PC-3 (cell line): ENCODE measurements at regions of chr7 and their contacts with region 1.

Region 1: DNA sequence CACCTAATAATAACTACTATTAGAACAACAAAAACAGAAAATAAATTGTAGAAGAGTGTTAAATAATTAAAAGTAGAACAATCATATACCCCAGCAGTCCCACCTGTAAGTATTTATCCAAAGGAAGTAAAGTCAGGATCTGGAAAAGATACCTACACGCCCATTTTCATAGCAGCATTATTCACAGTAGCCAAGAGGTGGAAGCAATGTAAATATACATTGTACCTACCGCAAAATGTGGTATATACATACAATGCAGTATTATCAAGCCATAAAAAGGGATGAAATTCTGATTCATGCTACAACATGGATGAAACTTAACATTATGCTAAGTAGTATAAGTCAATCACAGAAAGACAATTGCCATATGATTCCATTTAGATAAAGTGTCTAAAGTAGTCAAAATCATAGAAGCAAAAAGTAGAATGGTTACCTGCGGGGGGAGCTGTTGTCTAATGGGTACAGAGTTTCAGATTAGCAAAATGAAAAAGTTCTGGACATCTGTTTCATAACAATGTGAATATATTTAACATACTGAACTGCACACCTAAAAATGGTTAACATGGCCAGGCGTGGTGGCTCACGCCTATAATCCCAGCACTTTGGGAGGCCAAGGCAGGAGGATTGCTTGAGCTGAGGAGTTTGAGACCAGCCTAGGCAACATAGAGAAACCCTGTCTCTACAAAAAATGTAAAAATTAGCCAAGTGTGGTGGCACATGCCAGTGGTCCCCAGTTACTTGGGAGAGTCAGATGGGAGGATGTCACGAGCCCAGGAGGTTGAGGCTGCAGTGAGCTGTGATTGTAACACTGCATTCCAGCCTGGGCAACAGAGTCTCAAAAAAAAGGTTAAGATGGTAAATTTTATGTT is 6.0 kb upstream of the TMED4 start:
- DNase-seq: peak; percentile 77
- ATAC-seq: peak; percentile 88
- H3K4me3 ChIP-seq: no peak overlapping the region
- H3K27ac ChIP-seq: peak overlapping the region; percentile 65
- H3K4me1 ChIP-seq: peaks cover 9% of the 10 kb centered on the region; the same call in 1 of the 2 replicates
- H3K27me3 ChIP-seq: no peaks in the 10 kb centered on the region
- CTCF ChIP-seq: peak; percentile 87

Region 2: GRCh38 chr7:44240983-44241510 is 347.0 kb before region 1 on chr7:
- CTCF ChIA-PET with region 1: no interaction called
- POLR2A ChIA-PET with region 1: no interaction called
- intact Hi-C with region 1: no loop called
- DNase-seq: peak; percentile 75
- ATAC-seq: peak; percentile 98
- H3K4me3 ChIP-seq: peak overlapping the region; percentile 39; the same call in 1 of the 2 replicates
- H3K27ac ChIP-seq: no peak overlapping the region
- H3K4me1 ChIP-seq: no peaks in the 10 kb centered on the region
- H3K27me3 ChIP-seq: no peaks in the 10 kb centered on the region
- CTCF ChIP-seq: peak; percentile 85

Region 3: DNA sequence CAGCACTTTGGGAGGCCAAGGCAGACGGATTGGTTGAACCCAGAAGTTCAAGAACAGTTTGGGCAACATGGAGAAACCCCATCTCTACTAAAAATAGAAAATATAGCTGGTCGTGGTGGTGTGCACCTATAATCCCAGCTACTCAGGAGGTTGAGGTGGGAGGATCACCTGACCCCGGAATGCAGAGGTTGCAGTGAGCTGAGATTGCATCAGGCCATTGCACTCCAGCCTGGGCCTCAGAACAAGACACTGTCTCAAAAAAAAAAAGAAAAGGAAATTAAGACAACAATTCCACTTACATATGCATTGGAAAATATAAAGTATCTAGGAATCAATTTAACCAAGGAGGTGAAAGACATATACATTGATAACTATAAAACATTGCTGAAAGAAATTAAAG is 11.1 kb after region 1 on chr7:
- CTCF ChIA-PET with region 1: no interaction called
- POLR2A ChIA-PET with region 1: no interaction called
- intact Hi-C with region 1: no loop called
- DNase-seq: no peak
- ATAC-seq: no peak
- H3K4me3 ChIP-seq: no peak overlapping the region
- H3K27ac ChIP-seq: no peak overlapping the region
- H3K4me1 ChIP-seq: no peaks in the 10 kb centered on the region; the same call in 1 of the 2 replicates
- H3K27me3 ChIP-seq: no peaks in the 10 kb centered on the region
- CTCF ChIP-seq: no peak

Region 4: DNA sequence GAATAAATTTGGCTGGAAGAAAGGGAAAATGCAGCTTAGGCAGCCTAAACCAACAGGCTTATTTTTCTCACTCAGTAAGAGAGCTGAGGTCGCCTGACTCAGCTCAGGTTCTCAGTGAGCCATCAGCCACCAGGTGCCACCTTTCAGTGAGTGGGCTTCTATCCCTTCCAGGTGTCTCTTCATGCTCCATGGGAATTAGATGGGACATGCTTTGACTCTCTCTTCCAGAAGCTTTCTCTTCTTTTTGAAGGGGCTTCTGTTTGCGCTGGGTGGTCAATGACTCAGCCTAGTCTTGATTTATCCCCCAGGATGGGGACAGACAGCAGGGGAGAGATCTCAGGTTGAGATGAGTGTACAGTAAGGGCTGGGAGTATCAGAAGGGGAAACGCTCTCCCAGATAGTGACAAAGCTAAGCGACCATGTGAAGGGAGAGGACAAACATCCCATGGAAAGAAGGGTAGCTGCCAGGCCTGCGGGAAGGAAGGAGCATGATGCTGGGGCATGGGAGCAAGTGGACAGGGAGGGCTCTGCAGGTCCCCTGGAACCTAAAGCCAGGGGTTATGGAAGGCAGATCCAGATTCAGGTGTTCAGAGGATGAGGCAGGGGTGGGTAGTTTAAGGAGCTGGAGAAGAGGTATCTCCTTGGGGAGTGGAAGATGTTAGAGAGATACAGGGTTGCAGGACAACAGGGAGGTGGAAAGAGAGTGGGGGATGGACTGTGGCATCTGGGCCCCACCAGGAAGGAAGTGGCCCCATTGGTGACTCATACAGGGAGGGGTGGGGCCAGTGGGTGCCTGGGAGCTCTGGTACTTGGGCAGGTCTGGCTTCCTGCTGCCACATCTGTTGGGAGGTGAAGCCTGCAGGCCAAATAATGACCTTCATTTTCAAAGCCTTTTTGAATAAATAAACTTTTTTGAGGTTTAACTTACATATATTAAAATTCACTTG is 50.8 kb after region 1 on chr7:
- CTCF ChIA-PET with region 1: interaction called, 3 read pairs
- POLR2A ChIA-PET with region 1: no interaction called
- intact Hi-C with region 1: loop called (anchors 2 kb)
- DNase-seq: peak; percentile 82
- ATAC-seq: peak; percentile 84
- H3K4me3 ChIP-seq: no peak overlapping the region
- H3K27ac ChIP-seq: peak overlapping the region; percentile 98
- H3K4me1 ChIP-seq: peaks cover 51% of the 10 kb centered on the region
- H3K27me3 ChIP-seq: no peaks in the 10 kb centered on the region
- CTCF ChIP-seq: no peak

Region 5: DNA sequence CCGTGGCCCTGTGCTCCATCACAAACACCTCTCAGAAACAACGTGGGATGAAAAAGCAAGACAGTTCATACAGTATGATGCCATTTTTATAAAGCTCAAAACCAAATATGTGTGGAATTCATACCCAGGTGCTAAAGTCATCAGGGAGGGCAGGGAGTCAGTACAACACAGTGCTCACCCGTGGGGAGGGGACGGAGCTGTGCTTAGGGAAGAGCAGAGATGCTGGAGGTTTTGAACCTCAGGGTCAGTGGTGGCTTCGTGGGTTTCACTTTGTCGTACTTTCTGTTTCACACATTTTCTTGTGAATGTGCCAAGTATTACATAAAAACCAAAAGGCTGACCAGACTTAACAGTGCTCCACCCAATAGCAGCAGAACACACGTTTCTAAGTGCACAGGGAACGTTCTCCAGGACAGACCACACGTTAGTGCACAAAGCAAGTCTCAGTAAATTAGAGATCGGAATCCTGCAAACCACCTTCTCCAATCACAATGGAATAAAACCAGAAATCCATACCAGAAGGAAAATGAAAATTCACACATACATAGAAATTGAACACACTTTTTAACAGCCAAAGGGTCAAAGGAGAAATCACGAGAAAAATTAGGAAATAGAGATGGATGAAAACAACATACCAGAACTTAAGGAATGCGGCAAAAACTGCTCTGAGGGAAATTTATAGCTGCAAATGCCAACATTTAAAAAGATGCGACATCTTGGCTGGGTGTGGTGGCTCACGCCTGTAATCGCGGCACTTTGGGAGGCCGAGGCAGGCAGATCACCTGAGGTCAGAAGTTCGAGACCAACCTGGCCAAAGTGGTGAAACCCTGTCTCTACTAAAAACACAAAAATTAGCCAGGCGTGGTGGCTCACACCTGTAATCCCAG is 181.9 kb after region 1 on chr7:
- CTCF ChIA-PET with region 1: no interaction called
- POLR2A ChIA-PET with region 1: no interaction called
- intact Hi-C with region 1: loop called (anchors 5 kb)
- DNase-seq: no peak
- ATAC-seq: peak; percentile 5; the same call in 1 of the 2 replicates
- H3K4me3 ChIP-seq: no peak overlapping the region
- H3K27ac ChIP-seq: no peak overlapping the region
- H3K4me1 ChIP-seq: no peaks in the 10 kb centered on the region
- H3K27me3 ChIP-seq: no peaks in the 10 kb centered on the region
- CTCF ChIP-seq: no peak

Region 6: GRCh38 chr7:44847508-44847920 is 259.4 kb after region 1 on chr7:
- CTCF ChIA-PET with region 1: interaction called, 4 read pairs
- POLR2A ChIA-PET with region 1: no interaction called
- intact Hi-C with region 1: loop called (anchors 1 kb)
- DNase-seq: peak; percentile 75
- ATAC-seq: peak; percentile 72
- H3K4me3 ChIP-seq: peak overlapping the region; percentile 77
- H3K27ac ChIP-seq: peak overlapping the region; percentile 45
- H3K4me1 ChIP-seq: peaks cover 11% of the 10 kb centered on the region
- H3K27me3 ChIP-seq: no peaks in the 10 kb centered on the region
- CTCF ChIP-seq: peak; percentile 77

Region 7: DNA sequence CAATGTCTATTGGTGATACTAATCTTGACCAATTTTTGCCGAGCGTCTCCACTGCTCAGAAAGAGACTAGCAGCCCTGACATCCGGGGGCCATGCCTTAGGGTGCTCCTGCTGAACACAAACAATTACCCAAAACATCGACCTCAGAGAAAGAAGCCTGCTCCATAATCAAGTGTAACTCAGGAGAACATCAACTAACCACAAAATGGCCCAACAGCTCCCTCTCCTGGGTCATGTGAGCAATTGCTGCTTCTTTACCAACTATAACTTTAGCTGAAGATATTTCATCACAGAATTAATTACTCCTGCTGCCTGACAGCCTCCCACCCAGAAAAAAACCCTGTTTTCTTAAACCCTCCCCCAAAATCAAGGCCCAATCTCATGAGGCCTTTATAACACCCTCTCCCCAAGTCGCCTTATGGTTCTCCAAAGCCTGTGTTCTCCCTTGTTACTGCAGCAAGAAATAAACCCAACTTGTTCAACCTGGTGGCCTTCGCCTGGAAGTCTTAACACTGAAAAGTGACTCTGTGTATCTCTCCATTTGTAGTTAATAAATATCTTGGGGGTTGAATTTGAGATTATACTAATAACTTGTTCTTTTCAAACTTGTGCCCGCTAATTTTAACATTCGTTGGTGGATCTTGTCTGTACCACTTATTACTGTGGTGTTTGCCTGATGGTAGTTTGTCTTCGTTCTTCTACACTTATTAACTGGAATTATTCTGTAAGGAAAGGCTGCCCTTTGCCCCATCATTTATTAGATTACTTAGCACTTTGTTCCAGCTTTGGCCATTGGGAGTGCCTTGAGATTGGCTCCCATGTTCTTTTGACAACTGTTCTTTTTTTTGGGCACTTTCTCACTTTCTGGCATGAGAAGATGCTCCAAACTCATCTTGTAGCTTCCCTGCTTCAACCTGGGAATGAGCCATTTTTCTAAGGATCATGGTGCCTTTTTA is 548.3 kb after region 1 on chr7:
- CTCF ChIA-PET with region 1: no interaction called
- POLR2A ChIA-PET with region 1: no interaction called
- intact Hi-C with region 1: loop called (anchors 1 kb)
- DNase-seq: peak; percentile 78
- ATAC-seq: peak; percentile 88
- H3K4me3 ChIP-seq: no peak overlapping the region
- H3K27ac ChIP-seq: no peak overlapping the region
- H3K4me1 ChIP-seq: no peaks in the 10 kb centered on the region; the same call in 1 of the 2 replicates
- H3K27me3 ChIP-seq: no peaks in the 10 kb centered on the region
- CTCF ChIP-seq: peak; percentile 90